Heart right ventricle (tissue), 16 donors: ENCODE measurements at regions of chr7 and their contacts with region 1.

Region 1: GRCh38 chr7:159143780-159144757 is 598 bp downstream of the VIPR2 start:
- DNase-seq: peak; percentile 27 to 57
- ATAC-seq: peak; percentile 35 to 64 (median 56)
- H3K4me3 ChIP-seq: peak overlapping the region; percentile 53 to 78 (median 69)
- H3K27ac ChIP-seq: peak overlapping the region in 9 of 10 donors; percentile 12 to 79 (median 55)
- H3K4me1 ChIP-seq: peaks cover 0 to 52% (median 21%) of the 10 kb centered on the region in 9 donors
- H3K27me3 ChIP-seq: peaks cover 0 to 54% (median 25%) of the 10 kb centered on the region in 7 donors
- CTCF ChIP-seq: no peak

Region 2: DNA sequence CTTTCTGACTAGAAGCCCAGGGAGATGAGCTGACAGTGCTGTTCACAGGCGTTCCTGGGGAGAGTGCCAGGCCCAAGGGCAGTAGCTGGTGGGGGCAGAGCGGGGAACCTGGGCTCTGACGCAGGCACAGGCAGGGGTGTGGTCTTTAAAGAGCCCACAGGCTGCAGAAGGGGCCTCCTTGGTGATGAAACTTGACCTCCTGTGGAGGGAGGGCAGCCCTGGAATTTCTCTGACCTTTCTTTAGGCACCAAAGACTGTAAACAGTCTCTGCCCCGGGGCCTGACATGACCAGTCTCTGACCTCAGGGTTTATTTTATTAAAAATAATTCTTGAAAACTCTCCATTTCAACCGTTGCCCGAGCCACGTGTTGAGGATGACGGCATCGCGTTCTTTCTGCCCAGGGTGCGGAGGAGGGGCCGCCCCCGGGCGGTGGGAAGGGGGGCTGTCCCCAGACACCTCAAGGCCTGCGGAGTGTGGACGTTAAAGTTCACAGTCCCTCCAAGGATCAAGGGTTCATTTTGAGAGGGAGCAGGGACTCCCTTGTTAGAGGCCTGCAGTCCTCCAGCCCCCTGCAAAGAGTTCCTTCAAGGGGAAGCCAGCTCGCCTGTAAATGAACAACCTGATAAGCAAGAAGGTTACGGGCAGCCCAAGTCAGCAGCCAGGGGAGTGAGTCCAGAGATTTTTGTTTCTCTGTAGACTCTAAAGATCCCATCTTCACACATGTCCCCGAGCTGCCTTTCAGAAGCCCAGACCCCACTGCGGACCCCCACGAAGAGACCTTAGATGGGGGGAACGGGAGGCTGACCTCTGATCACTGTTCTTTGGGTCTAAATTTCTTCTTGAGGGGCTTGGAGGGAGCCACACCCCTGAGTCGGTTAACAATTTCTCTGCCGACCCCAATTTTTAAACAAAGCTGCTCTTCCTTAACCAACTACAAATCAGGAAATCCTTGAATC is 128.3 kb before region 1 on chr7:
- intact Hi-C with region 1: loop called in 1 of 10 experiments (anchors 10 kb)
- DNase-seq: peak; percentile 66 to 73
- ATAC-seq: peak; percentile 62 to 93 (median 84)
- H3K4me3 ChIP-seq: no peak overlapping the region
- H3K27ac ChIP-seq: peak overlapping the region; percentile 17 to 85 (median 75)
- H3K4me1 ChIP-seq: peaks cover 0 to 46% (median 31%) of the 10 kb centered on the region in 9 donors
- H3K27me3 ChIP-seq: no peaks in the 10 kb centered on the region
- CTCF ChIP-seq: no peak

Region 3: GRCh38 chr7:159030490-159031134 is 113.5 kb before region 1 on chr7:
- intact Hi-C with region 1: loop called in 3 of 10 experiments (anchors 5 to 10 kb)
- DNase-seq: peak; percentile 60 to 62
- ATAC-seq: peak; percentile 53 to 77 (median 69)
- H3K4me3 ChIP-seq: peak overlapping the region; percentile 32 to 67 (median 56)
- H3K27ac ChIP-seq: peak overlapping the region; percentile 34 to 84 (median 75)
- H3K4me1 ChIP-seq: peaks cover 0 to 37% (median 17%) of the 10 kb centered on the region in 9 donors
- H3K27me3 ChIP-seq: peaks cover 0 to 25% (median 0%) of the 10 kb centered on the region in 7 donors
- CTCF ChIP-seq: peak in 8 of 9 donors; percentile 7 to 58 (median 46)

Region 4: DNA sequence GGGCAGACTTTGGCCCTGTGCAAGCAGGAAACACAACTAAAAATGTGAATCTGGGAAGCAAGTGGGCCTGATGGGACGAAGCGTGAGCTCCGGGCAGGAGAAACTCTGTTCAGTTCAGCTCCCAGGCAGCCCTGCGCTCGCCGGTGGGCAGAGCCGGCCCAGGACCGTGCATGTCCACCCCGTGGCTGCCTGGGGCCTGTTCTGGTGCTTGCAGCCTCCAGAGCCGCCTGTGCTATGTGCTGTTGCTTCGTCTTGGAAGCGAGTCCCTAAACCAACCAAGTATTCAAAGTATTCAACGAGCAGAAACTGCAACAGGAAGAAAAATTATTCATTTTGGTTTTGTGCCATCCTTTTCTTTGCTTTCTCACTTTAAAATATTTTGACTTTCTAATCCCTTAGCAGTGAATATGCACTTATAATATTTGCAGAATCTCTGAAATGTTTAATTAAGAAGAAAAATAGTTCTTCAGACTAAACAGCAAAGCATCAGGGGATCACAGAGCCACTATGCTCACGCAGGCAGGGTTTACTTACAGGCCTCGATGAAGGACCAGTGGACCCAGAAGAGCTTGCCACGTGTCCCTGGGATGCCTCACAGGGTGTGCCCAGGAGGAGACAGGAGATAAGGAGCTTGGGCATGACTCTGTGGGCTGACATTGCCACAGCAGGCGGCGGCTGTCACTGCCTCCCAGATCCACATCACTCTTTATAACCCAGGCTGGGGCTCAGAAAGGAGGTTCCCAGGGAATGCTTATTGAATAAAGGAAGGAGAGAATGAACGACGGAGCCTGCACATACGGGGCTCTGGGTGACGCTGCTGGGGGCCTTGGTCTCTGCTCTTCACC is 45.0 kb before region 1 on chr7:
- intact Hi-C with region 1: loop called in 6 of 10 experiments (anchors 5 kb)
- DNase-seq: no peak
- ATAC-seq: peak in 3 of 8 donors; percentile 14 to 44 (median 22)
- H3K4me3 ChIP-seq: no peak overlapping the region
- H3K27ac ChIP-seq: peak overlapping the region; percentile 86 to 99 (median 95)
- H3K4me1 ChIP-seq: peaks cover 16 to 61% (median 37%) of the 10 kb centered on the region in 9 donors
- H3K27me3 ChIP-seq: no peaks in the 10 kb centered on the region
- CTCF ChIP-seq: peak in 2 of 9 donors; percentile 13 to 19

Region 5: DNA sequence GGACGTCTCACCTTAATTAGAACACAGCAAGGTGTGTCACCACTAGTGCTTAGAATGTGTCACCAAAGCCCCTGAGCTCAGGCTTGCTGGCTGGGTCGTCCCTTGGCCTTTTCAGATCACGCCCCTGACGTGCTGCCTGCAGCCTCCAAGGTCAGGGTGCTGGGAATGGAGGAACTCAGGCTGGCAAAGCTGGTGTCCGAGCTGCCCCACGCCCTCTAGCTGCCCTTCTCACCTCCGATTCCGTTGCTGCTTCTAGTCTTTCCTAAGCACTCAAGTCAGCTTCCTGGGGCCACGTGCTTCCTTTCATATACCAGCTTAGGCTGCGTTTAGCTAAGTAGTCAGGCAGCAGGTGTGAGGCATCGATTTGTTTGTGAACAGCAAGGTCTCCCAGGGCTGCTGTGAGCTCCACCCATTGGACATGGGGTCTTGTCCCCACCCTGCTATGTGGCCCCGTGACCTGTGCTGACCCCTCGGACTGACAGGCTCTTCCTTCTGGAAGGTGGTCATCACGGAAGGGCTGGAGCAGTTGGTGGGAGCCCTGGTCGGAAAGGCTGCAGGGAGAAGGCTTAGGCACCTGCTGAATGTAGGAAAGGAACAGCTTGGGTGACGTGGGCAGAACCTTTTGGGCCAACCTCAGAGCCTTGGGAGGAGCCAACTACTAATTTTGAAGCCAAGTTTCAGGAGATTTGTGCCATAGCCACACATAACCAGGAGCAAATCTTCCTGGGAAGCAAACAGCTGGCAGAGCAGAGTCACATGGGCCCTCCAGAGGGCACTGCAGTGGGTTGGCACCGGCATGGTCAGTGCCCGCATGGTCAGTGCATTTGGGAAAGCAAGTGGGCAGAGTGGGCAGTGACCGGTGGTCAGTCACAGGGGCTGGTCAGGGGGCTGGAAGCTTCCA is 28.2 kb before region 1 on chr7:
- intact Hi-C with region 1: no loop called
- DNase-seq: no peak
- ATAC-seq: peak in 4 of 8 donors; percentile 37 to 56 (median 48)
- H3K4me3 ChIP-seq: no peak overlapping the region
- H3K27ac ChIP-seq: peak overlapping the region in 1 of 10 donors; percentile 7
- H3K4me1 ChIP-seq: peaks cover 0 to 21% (median 10%) of the 10 kb centered on the region in 9 donors
- H3K27me3 ChIP-seq: peaks cover 0 to 8% (median 0%) of the 10 kb centered on the region in 7 donors
- CTCF ChIP-seq: peak in 1 of 9 donors; percentile 24

Region 6: DNA sequence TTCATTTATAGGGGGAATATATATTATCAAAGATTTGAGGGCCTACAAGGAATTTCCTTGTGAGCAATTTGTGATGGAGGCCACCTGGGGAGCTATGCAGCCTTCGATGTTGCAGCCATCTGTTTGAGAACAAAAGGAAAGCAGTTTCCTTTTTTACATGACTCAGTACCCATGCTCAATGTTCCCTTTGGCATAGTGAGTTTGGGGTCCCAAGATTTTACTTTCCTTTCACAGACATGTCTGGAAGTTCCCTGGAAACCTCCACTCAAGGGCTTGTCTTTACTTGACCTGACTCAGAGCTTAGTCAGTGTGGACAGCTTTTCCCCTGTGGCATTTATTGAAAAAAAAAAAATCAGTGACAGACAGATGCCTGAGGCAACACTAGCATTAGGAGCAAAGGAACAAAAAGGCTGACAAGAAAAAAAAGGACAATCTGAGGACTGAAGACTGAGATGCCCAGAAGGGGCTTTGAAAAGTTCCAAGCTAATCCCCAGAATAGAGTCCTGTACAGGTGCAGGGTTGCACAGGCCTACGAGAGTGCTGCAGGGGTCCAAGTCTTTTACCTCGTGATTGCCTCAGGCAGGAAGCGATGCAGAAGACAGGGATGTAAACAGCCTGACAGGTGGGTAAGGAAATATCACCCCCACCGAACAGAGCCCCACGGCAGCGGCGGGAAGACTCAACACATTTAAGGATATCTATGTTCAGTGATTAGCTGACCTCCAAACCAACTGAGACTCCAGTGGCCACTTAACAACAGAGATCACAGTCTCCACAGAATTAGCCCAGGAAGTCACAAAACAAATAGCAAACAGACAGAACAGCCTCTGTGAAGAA is 74.3 kb after region 1 on chr7:
- intact Hi-C with region 1: no loop called
- DNase-seq: no peak
- ATAC-seq: no peak
- H3K4me3 ChIP-seq: no peak overlapping the region
- H3K27ac ChIP-seq: no peak overlapping the region
- H3K4me1 ChIP-seq: no peaks in the 10 kb centered on the region
- H3K27me3 ChIP-seq: peaks cover 0 to 16% (median 0%) of the 10 kb centered on the region in 7 donors
- CTCF ChIP-seq: no peak